Colonic mucosa (tissue), 4 donors: ENCODE measurements at regions of chr10 and their contacts with region 1.

Region 1: GRCh38 chr10:26881600-26882331 is 21.0 kb upstream of the ABI1 start:
- DNase-seq: no peak
- H3K4me3 ChIP-seq: no peak overlapping the region
- H3K27ac ChIP-seq: no peak overlapping the region
- H3K4me1 ChIP-seq: no peaks in the 10 kb centered on the region
- H3K27me3 ChIP-seq: no peaks in the 10 kb centered on the region
- CTCF ChIP-seq: peak; percentile 35

Region 2: GRCh38 chr10:26612151-26612915 is 269.4 kb before region 1 on chr10:
- intact Hi-C with region 1: loop called (anchors 5 kb)
- DNase-seq: peak; percentile 63
- H3K4me3 ChIP-seq: no peak overlapping the region
- H3K27ac ChIP-seq: peak overlapping the region; percentile 52
- H3K4me1 ChIP-seq: no peaks in the 10 kb centered on the region
- H3K27me3 ChIP-seq: no peaks in the 10 kb centered on the region
- CTCF ChIP-seq: no peak

Region 3: DNA sequence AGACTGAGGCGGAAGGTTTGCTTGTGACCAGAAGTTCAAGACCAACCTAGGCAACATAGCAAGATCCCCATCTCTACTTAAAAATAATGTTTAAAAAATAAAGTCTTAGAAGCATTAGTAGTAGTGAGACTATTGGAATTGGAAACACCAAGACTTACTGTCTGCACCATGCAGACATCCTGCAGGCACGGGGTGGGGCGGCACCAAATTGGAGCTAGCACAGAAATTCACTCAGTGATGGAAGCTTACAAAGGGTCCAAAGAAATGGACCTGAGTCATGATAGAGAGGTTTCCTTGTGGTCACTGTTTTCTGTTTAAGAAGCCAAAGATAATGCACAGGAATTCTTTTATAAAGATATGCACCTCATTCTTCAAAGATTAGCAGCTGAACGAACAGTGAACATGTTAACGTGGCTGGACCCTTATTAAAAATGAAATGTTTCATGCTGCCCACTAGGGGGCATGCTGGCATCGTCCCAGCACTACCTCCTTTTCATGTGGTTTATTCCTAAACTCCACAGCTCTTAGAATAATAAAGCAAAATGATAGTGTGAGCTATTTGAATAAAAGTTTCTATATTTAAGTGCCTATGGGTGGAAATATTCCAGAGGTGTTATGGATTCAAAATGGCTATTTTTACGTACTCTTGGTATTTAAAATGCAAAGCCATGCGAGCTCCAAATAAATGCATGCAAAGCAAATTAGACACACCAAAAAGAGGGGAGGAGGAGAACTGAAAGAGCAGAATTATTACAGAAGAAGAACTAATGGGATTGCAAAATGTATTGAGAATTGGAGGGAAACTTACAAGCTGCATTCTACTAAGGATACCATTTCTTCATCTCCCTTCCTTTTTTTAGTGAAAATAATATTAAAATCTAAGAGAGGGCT is 155.7 kb before region 1 on chr10:
- intact Hi-C with region 1: loop called (anchors 5 kb)
- DNase-seq: no peak
- H3K4me3 ChIP-seq: no peak overlapping the region
- H3K27ac ChIP-seq: no peak overlapping the region
- H3K4me1 ChIP-seq: no peaks in the 10 kb centered on the region
- H3K27me3 ChIP-seq: no peaks in the 10 kb centered on the region
- CTCF ChIP-seq: peak; percentile 81

Region 4: GRCh38 chr10:26960308-26960707 is 78.5 kb after region 1 on chr10:
- intact Hi-C with region 1: no loop called
- DNase-seq: no peak
- H3K4me3 ChIP-seq: no peak overlapping the region
- H3K27ac ChIP-seq: no peak overlapping the region
- H3K4me1 ChIP-seq: no peaks in the 10 kb centered on the region
- H3K27me3 ChIP-seq: no peaks in the 10 kb centered on the region
- CTCF ChIP-seq: no peak